Mucosa of descending colon (tissue), 3 donors: ENCODE measurements at regions of chr2 and their contacts with region 1.

Region 1: DNA sequence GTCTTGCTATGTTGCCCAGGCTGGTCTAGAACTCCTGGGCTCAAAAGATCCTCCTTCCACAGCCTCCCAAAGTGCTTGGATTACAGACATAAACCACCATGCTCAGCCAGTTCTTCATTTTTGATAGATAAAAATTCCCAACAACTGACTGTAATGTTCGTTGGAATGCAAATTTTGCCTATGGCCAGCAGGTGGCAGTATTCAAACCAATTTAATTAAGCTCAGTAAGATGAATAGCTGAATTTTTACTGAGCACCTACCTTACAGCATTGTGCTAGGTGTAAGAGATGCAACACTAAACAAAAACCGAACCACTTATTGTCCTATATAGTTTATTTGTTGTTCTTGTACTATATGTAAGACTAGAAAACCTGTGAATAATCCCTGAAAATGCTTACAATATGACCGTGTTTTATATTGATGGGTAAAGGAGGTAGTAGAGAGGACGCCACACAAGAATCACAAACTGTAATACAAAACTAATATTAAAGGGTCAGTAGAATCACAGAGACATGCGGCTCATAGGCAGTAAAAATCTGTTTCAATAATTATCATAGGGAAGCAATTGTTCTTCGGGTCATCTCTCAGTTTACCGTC is 8.2 kb upstream of the TMEM182 start:
- DNase-seq: peak in 1 of 3 donors; percentile 26
- ATAC-seq: peak; percentile 50
- H3K4me3 ChIP-seq: no peak overlapping the region
- H3K4me1 ChIP-seq: no peaks in the 10 kb centered on the region
- CTCF ChIP-seq: peak; percentile 77

Region 2: DNA sequence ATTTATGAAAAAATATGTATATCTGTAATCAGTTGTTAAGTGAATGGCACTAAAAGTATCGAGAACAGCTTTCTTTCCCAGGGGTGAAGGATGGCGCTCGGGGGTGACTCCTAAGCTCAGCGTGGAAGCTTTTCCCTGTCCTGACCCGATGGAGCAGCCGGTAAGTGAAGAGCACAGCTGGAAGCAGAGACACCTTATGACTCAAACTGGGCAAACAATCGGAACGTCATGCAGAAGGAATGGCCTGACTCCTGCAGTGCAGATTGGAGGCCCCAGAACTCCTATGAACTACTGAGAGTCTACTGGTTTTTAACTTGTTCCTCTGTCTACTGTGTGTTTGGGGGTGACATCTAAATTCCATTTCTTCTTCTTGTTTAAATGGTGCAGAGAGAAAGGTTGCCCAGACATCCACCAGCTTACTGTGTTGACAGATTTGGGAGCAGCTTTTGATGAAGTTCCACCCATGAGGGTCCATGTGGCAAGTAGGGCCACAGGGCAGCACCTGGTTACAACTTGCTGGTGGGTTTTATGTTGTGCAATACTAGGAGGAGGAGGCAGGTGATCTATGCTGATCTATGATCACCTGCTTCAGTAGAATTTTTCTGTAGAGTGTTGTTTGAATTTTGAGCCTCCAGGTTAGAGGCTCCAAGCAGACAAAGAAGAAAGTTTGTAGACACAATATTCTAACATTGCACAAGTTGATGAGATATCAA is 44.7 kb before region 1 on chr2:
- intact Hi-C with region 1: no loop called
- DNase-seq: no peak
- ATAC-seq: peak; percentile 52
- H3K4me3 ChIP-seq: no peak overlapping the region
- H3K4me1 ChIP-seq: no peaks in the 10 kb centered on the region
- CTCF ChIP-seq: no peak

Region 3: DNA sequence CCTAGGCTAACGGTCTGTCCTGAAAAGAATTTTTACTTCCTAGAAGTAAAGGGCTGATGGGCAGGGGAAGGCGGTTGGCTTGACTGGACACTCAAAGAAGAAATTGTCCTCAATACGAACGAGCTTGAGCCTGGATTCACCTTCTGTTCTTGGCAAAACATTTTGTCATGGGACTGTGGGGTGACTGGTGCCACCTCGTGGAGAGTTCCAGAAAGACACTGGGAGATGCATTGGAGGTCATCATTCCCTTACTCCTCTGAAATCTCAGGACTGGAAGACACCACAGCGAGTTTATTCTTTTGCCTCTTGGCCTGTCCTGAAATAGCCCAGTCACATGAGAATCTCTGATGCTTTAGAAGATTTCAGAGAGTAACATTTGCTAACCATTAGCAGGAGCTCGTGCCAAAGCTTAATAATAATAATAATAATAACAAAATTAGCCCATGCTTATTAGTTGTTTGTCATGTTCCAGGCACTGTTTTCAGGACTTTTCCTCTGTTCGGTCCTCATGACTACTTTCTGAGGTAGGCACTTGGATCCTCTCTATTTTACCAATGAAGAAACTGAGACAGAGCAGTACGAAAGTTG is 52.7 kb after region 1 on chr2:
- intact Hi-C with region 1: loop called in 1 of 2 experiments (anchors 10 kb)
- DNase-seq: peak in 2 of 3 donors; percentile 72 to 81
- ATAC-seq: peak; percentile 83
- H3K4me3 ChIP-seq: no peak overlapping the region
- H3K4me1 ChIP-seq: no peaks in the 10 kb centered on the region
- CTCF ChIP-seq: peak; percentile 54

Region 4: DNA sequence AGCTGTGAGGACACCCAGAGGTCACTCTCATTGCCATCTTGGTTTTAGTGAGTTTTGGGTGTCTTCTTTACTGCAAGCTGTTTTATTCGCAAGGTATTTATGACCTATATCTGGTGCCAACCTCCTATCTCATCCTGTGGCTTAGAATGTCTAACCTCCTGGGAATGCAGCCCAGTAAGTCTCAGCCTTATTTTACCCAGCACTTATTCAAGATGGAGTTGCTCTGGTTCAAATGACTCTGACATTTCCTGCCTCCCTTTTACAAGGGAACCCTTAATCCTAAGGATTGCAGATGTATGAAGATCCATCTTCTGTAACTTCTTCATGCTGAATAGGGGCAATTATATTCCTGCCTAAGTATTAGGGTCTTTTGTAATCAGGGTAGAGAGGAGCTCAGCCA is 716.1 kb after region 1 on chr2:
- intact Hi-C with region 1: no loop called
- DNase-seq: no peak
- ATAC-seq: no peak
- H3K4me3 ChIP-seq: no peak overlapping the region
- H3K4me1 ChIP-seq: no peaks in the 10 kb centered on the region
- CTCF ChIP-seq: no peak